Mucosa of descending colon (tissue), 3 donors: ENCODE measurements at regions of chr1 and their contacts with region 1.

Region 1: GRCh38 chr1:35715568-35716002 is 3.1 kb downstream of the C1orf216 start:
- DNase-seq: peak; percentile 75 to 84 (median 83)
- ATAC-seq: peak; percentile 85
- H3K4me3 ChIP-seq: no peak overlapping the region
- H3K4me1 ChIP-seq: peaks cover 5% of the 10 kb centered on the region
- CTCF ChIP-seq: peak; percentile 69

Region 2: GRCh38 chr1:35577071-35577998 is 138.2 kb before region 1 on chr1:
- intact Hi-C with region 1: loop called in 1 of 2 experiments (anchors 5 kb)
- DNase-seq: peak; percentile 51 to 85 (median 74)
- ATAC-seq: peak; percentile 76
- H3K4me3 ChIP-seq: peak overlapping the region; percentile 17
- H3K4me1 ChIP-seq: peaks cover 19% of the 10 kb centered on the region
- CTCF ChIP-seq: no peak